ENCODE measurements at regions of chr9 and their contacts with region 1.

Region 1: GRCh38 chr9:22052376-22052945 is 43.4 kb upstream of the CDKN2B start:
- DNase-seq: peak; percentile 76
- H3K4me3 ChIP-seq: no peak overlapping the region
- CTCF ChIP-seq: no peak

Region 2: DNA sequence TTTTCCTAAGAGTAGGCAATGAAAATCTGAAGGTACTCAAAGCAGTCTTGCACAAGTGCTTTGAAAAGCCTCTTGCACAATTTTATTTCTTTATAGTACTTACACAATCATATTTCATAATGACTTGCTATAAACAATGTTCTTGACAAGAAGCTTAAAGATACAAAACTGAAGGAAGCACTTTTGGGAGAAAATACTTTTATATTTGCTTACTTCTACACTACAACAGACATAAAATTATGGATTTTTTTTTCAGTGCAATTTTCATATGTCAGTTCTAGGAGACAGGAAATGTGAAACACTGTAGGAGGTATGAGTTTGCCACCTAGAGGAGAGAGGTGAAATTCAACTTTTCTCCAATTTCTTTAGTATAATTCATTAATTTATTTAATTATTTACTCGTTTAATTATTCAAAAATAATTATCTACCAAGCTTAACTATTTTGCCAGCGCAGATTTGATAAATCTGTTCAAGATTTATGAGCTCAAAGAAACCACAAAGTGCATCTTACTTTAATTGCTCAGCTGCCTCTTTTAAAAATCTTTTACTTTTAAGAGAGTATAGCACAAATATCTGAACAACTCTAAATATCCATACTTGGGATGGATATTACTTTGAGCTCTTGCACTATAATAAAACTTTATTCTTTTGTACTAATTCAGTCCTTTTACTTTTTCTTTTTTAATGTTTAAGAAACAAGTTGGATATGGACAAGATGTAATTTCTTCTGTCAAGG is 14.3 kb before region 1 on chr9:
- CTCF ChIA-PET with region 1: interaction called, 81 read pairs
- POLR2A ChIA-PET with region 1: no interaction called
- DNase-seq: no peak
- H3K4me3 ChIP-seq: no peak overlapping the region
- CTCF ChIP-seq: peak; percentile 9

Measured in AG04449 (cell line).